ENCODE measurements at regions of chr4 and their contacts with region 1.

Region 1: DNA sequence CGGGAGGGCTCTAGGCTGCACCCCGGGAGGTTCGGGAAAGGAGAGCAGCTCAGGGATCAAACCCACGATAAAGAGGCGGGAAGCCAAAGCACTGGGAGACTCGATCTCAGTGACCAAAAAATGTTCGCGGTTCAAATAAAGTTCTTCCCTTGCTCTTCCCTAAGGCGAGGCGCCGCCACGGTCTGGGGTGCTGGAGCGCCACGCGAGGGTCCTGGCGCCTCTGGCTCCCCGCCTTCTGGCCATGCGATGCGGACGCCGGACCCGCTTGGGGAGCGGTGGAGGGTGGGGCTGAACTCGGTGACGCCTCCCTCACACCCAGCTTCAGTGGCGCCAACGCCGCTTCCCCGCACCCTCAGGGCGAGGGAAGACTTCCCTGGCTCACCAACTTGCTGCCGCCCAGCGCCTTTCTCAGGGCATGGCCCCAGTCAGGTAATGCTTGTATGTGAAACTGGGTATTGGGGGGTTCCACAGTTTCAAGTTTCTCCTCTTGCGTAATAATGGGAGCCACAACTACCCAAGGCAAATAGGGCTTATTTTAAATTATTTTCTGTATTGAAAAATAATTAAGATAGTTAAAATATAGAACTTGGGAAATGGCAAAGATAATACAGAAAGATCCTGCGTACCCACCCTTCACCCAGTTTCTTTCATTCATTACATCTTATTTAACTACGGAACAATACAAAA is at the start of gene QRFPR:
- DNase-seq: no peak
- ATAC-seq: peak; percentile 46
- H3K4me3 Mint-ChIP-seq: peak within 1 kb of the TSS; percentile 61
- H3K27ac Mint-ChIP-seq: no peak within 1 kb of the TSS
- H3K4me1 Mint-ChIP-seq: peaks cover 7% of the 10 kb centered on the region
- H3K27me3 Mint-ChIP-seq: peaks cover 76% of the 10 kb centered on the region
- total RNA-seq, gene QRFPR: not detected

Region 2: GRCh38 chr4:121252224-121252806 is 128.6 kb before region 1 on chr4:
- CTCF ChIA-PET with region 1: no interaction called
- DNase-seq: peak; percentile 77
- ATAC-seq: no peak
- H3K4me3 Mint-ChIP-seq: no peak overlapping the region
- H3K27ac Mint-ChIP-seq: peak overlapping the region; percentile 71
- H3K4me1 Mint-ChIP-seq: peaks cover 75% of the 10 kb centered on the region
- H3K27me3 Mint-ChIP-seq: no peaks in the 10 kb centered on the region

Region 3: GRCh38 chr4:121358473-121358872 is 22.4 kb before region 1 on chr4:
- CTCF ChIA-PET with region 1: no interaction called
- DNase-seq: no peak
- ATAC-seq: no peak
- H3K4me3 Mint-ChIP-seq: no peak overlapping the region
- H3K27ac Mint-ChIP-seq: no peak overlapping the region
- H3K4me1 Mint-ChIP-seq: no peaks in the 10 kb centered on the region
- H3K27me3 Mint-ChIP-seq: peaks cover 32% of the 10 kb centered on the region

Region 4: GRCh38 chr4:121370729-121371325 is 10.1 kb before region 1 on chr4:
- CTCF ChIA-PET with region 1: interaction called, 11 read pairs
- DNase-seq: peak; percentile 51
- ATAC-seq: no peak
- H3K4me3 Mint-ChIP-seq: no peak overlapping the region
- H3K27ac Mint-ChIP-seq: no peak overlapping the region
- H3K4me1 Mint-ChIP-seq: no peaks in the 10 kb centered on the region
- H3K27me3 Mint-ChIP-seq: peaks cover 32% of the 10 kb centered on the region

Region 5: DNA sequence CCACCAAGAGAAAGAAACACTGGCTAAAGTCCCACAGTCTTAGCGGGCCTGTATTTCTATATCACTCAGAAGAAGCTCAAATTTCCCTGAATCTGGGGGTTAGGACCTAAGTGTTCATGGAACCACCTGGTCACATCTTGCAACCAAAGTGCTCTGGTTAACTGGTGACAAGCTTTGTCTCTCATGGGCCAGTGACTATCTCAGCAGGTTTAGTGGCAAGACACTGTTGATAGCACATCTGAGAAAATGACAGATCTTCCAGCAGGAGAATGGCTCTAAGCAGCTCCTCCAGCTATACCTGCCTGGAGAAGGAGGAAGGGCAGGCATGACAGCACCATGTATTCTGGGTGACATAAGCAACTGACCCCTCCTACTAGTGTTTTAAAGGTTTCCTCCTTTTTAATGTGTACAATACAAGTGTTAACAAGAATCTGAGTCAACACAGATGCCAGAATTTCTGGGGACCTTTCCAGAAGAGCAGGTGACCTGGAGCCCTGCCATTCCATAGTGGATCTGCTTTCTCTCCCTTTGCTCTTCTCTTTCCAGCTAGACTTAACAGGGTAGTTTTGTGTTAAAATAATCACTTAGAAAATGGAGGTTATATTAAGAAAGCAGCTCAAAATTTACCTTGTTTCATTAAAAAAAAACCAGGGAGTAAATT is 17.2 kb after region 1 on chr4:
- CTCF ChIA-PET with region 1: no interaction called
- DNase-seq: no peak
- ATAC-seq: no peak
- H3K4me3 Mint-ChIP-seq: no peak overlapping the region
- H3K27ac Mint-ChIP-seq: no peak overlapping the region
- H3K4me1 Mint-ChIP-seq: no peaks in the 10 kb centered on the region
- H3K27me3 Mint-ChIP-seq: peaks cover 9% of the 10 kb centered on the region